AG04449 (cell line): ENCODE measurements at regions of chr13 and their contacts with region 1.

Region 1: GRCh38 chr13:110323172-110323891 is 16.2 kb downstream of the COL4A2 start:
- DNase-seq: no peak
- H3K4me3 ChIP-seq: no peak overlapping the region
- CTCF ChIP-seq: no peak

Region 2: DNA sequence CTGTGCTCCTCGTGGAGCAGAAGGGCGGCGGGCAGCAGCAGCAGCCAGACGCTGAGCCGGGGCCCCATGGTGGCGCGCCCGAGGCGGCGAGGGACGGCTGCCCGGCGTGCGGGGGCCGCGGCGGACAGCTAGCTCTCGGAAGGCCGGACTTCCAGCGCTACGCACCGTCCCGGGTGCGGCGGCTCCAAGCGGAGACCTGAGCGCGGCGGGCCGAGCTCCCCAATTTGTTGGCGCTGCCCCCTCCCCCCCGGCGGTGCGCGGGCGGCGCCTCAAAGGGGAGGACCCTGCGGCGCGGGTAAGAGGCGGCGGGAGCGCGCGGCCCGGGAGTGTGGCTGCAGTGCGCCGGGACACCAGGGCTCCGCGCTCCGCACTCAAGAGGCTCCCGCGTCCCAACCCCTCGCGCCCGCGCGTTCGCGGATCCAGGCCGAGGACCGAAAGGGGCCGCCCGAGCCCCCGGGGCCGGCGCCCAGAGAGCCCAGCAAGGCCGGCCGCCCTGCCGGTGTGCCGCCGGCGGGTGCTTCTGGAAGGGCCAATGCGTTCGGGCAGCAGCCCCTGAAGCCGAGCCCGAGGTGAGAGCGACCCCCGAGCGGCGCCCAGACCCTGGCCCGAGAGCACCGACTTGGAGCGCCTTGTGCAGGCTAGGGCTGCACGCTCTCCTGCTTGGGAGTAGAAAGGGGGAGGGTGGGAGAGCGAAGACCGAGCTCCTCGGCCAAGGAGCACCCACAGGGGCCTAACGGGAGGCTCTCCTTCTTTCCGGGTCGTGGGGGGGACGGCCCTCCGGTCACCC is 16.2 kb before region 1 on chr13 and contains the starts of genes COL4A1 and COL4A2:
- CTCF ChIA-PET with region 1: interaction called, 10 read pairs
- POLR2A ChIA-PET with region 1: interaction called, 12 read pairs
- DNase-seq: no peak
- H3K4me3 ChIP-seq: peak within 1 kb of the TSS; percentile 78
- CTCF ChIP-seq: no peak